CD4-positive, alpha-beta T cell (primary cell): ENCODE measurements at regions of chr2 and their contacts with region 1.

Region 1: DNA sequence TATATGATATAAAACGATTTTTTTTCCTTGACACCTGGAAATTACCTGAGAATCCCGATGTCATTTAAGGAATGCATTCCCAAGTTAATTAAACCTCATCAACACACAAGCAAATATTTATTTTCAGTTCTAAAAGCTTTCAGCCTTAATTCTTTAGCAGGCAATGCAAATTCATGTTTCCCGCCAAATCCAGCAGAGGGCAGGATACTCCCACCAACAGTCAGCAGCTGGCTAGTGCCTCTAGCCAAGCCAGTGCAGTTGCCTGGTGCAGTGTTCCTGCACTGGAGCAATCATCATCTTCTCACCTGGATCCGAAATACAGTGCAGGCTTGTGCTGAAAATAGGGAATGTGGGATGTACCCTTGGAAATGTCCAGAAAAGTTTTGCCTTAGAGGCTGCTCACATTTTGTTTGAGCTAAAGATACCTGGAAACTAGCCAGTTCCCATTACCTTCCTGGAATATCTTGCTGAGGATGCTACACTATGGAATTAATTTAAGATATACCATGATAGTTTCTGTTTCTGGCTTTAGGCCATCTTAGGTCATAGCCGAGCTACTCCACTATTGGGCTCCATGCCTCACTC is 48.4 kb upstream of the CYTIP start:
- DNase-seq: peak; percentile 57 to 86 (median 66)
- ATAC-seq: peak; percentile 92
- H3K4me3 ChIP-seq: no peak overlapping the region
- H3K4me3 Mint-ChIP-seq: no peak overlapping the region
- H3K27ac ChIP-seq: no peak overlapping the region
- H3K27ac Mint-ChIP-seq: no peak overlapping the region
- H3K4me1 ChIP-seq: peaks cover 7% of the 10 kb centered on the region
- H3K4me1 Mint-ChIP-seq: peaks cover 47% of the 10 kb centered on the region
- H3K27me3 ChIP-seq: no peaks in the 10 kb centered on the region
- H3K27me3 Mint-ChIP-seq: no peaks in the 10 kb centered on the region
- CTCF ChIP-seq: peak; percentile 83

Region 2: DNA sequence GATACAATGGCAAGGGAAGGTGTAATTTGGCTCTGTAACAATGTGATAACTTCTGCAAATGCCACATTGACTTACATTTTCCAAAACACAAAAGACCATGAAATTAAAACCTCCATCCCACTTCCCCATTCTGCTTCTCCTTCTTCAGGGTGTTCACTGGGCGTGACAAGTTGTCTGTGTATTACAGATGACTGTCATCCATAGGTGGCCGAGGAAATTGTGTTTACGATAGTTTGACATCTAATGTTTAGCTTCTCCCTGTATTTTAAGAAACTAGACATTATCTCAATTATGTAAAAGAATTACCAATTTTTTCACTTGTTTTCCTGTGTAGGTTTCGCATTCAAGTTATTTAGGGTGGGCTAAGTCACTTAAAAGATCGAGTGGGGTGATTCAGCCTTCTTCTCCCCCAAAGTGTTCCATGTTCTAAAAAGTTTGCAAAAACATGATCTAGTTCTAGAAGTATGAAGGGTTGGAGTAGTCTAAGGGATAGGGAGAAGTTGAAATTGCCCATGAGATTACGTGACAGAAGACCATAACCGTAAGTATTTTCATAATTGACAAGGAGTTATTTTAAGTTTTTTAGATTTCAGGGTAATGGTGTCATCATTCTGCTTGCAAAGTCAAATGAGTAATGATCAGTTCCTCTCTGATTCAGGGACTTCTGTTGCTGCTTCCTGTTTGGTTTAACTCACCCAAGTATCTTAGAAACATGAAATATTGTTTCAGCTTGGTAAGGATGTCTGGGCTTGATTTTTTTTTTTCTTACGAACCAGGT is 23.2 kb before region 1 on chr2:
- CTCF ChIA-PET with region 1: interaction called, 6 read pairs
- POLR2A ChIA-PET with region 1: interaction called, 8 read pairs
- intact Hi-C with region 1: loop called in 1 of 2 experiments (anchors 2 kb)
- DNase-seq: peak in 3 of 14 experiments; percentile 81 to 86 (median 84)
- ATAC-seq: peak; percentile 89
- H3K4me3 ChIP-seq: peak overlapping the region; percentile 11
- H3K4me3 Mint-ChIP-seq: peak overlapping the region; percentile 74
- H3K27ac ChIP-seq: peak overlapping the region; percentile 80 to 88
- H3K27ac Mint-ChIP-seq: peak overlapping the region; percentile 98
- H3K4me1 ChIP-seq: peaks cover 31% of the 10 kb centered on the region
- H3K4me1 Mint-ChIP-seq: peaks cover 64% of the 10 kb centered on the region
- H3K27me3 ChIP-seq: no peaks in the 10 kb centered on the region
- H3K27me3 Mint-ChIP-seq: no peaks in the 10 kb centered on the region
- CTCF ChIP-seq: no peak

Region 3: GRCh38 chr2:157628477-157629415 is 136.5 kb after region 1 on chr2 and contains the start of gene ACVR1C:
- CTCF ChIA-PET with region 1: interaction called, 4 read pairs
- POLR2A ChIA-PET with region 1: interaction called, 3 read pairs
- intact Hi-C with region 1: loop called in 1 of 2 experiments (anchors 5 kb)
- DNase-seq: peak; percentile 42 to 92 (median 61)
- ATAC-seq: peak; percentile 77
- H3K4me3 ChIP-seq: peak within 1 kb of the TSS; percentile 81
- H3K4me3 Mint-ChIP-seq: peak within 1 kb of the TSS; percentile 97
- H3K27ac ChIP-seq: peak within 1 kb of the TSS in 1 of 2 donors; percentile 74
- H3K27ac Mint-ChIP-seq: peak within 1 kb of the TSS; percentile 86
- H3K4me1 ChIP-seq: peaks cover 22% of the 10 kb centered on the region
- H3K4me1 Mint-ChIP-seq: peaks cover 40% of the 10 kb centered on the region
- H3K27me3 ChIP-seq: no peaks in the 10 kb centered on the region
- H3K27me3 Mint-ChIP-seq: no peaks in the 10 kb centered on the region
- CTCF ChIP-seq: peak; percentile 43
- total RNA-seq, gene ACVR1C: 5.2 to 6.2 TPM

Region 4: GRCh38 chr2:157777427-157777826 is 285.1 kb after region 1 on chr2:
- CTCF ChIA-PET with region 1: no interaction called
- POLR2A ChIA-PET with region 1: no interaction called
- intact Hi-C with region 1: loop called in 1 of 2 experiments (anchors 5 kb)
- DNase-seq: peak; percentile 13 to 62 (median 39)
- ATAC-seq: no peak
- H3K4me3 ChIP-seq: no peak overlapping the region
- H3K4me3 Mint-ChIP-seq: no peak overlapping the region
- H3K27ac ChIP-seq: no peak overlapping the region
- H3K27ac Mint-ChIP-seq: no peak overlapping the region
- H3K4me1 ChIP-seq: peaks cover 8% of the 10 kb centered on the region
- H3K4me1 Mint-ChIP-seq: peaks cover 13% of the 10 kb centered on the region
- H3K27me3 ChIP-seq: no peaks in the 10 kb centered on the region
- H3K27me3 Mint-ChIP-seq: no peaks in the 10 kb centered on the region
- CTCF ChIP-seq: peak; percentile 64

Region 5: GRCh38 chr2:158006961-158007719 is 514.9 kb after region 1 on chr2:
- CTCF ChIA-PET with region 1: no interaction called
- POLR2A ChIA-PET with region 1: no interaction called
- intact Hi-C with region 1: loop called (anchors 2 kb)
- DNase-seq: peak in 2 of 14 experiments; percentile 16 to 20
- ATAC-seq: no peak
- H3K4me3 ChIP-seq: no peak overlapping the region
- H3K4me3 Mint-ChIP-seq: no peak overlapping the region
- H3K27ac ChIP-seq: no peak overlapping the region
- H3K27ac Mint-ChIP-seq: no peak overlapping the region
- H3K4me1 ChIP-seq: no peaks in the 10 kb centered on the region
- H3K4me1 Mint-ChIP-seq: peaks cover 9% of the 10 kb centered on the region
- H3K27me3 ChIP-seq: no peaks in the 10 kb centered on the region
- H3K27me3 Mint-ChIP-seq: no peaks in the 10 kb centered on the region
- CTCF ChIP-seq: no peak